MCF 10A (cell line): ENCODE measurements at regions of chr4 and their contacts with region 1.

Region 1: GRCh38 chr4:40550948-40551462 is 78.7 kb downstream of the RBM47 start:
- DNase-seq: peak; percentile 64
- H3K4me3 Mint-ChIP-seq: peak overlapping the region; percentile 58
- H3K27ac Mint-ChIP-seq: peak overlapping the region; percentile 32
- H3K4me1 Mint-ChIP-seq: peaks cover 15% of the 10 kb centered on the region
- H3K27me3 Mint-ChIP-seq: no peaks in the 10 kb centered on the region
- CTCF ChIP-seq: peak; percentile 17

Region 2: DNA sequence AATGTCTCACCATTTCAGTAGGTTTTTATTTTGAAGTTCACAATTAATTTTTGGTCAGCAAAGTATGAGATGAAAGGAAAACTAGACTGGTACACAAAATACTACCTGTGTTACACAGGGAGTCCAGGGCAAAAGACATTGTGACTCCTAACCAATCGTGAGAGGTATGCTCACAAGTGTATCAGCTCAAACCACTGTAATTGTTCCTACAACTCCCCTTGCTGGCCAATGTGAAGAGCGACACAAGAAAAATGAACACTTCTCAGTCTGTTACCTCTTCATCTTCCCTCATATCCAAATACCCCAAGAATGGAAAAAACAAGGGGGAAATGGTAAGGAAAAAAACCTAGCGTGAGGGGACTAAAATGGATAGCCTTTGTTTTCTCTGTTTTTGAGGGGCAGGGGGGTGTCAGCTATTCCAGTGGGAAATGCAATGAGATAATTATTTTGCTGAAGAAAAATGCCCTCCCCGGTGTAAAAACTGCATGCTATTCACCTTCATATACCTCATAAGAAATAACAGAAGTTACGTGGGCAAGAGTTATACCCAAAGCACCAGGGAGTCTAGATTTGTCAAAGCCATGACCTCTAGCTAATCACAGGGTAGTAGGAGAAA is 168.1 kb after region 1 on chr4:
- CTCF ChIA-PET with region 1: no interaction called
- POLR2A ChIA-PET with region 1: no interaction called
- intact Hi-C with region 1: loop called (anchors 1 kb)
- DNase-seq: peak; percentile 74
- H3K4me3 Mint-ChIP-seq: no peak overlapping the region
- H3K27ac Mint-ChIP-seq: no peak overlapping the region
- H3K4me1 Mint-ChIP-seq: no peaks in the 10 kb centered on the region
- H3K27me3 Mint-ChIP-seq: no peaks in the 10 kb centered on the region
- CTCF ChIP-seq: peak; percentile 60